HepG2 (cell line): ENCODE measurements at regions of chr1 and their contacts with region 1.

Region 1: DNA sequence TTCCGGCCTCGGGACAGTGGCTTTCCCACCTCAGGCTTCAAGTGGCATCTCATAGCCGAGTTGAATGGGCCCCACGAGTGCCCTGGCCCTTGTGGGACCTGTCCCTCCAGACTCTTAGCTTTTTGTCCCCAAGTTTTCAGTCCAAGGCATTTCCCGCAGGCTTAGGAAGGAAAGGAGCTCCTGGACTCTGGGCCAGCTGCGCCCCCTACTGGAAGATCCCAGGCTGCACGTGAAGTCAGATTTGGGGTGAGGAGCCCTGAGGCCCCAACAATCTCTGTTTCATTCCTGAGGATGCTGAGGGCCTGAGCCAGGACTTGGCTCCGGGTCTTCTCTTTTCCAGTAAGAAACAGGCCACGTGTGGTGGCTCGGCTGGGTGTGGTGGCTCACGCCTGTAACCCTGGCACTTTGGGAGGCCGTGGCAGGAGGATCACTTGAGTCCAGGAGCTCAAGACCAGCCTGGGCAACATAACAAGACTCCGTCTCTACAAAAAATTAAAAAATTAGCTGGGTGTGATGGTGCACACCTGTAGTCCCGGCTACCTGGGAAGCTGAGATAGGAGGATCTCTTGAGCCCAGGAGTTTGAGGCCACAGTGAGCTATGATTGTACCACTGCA is 67.4 kb downstream of the ARHGEF10L start:
- DNase-seq: peak; percentile 62
- ATAC-seq: peak; percentile 55
- H3K4me3 ChIP-seq: no peak overlapping the region
- H3K27ac ChIP-seq: no peak overlapping the region
- H3K4me1 ChIP-seq: peaks cover 25% of the 10 kb centered on the region
- H3K27me3 ChIP-seq: no peaks in the 10 kb centered on the region
- CTCF ChIP-seq: peak; percentile 92
- EP300 ChIP-seq: no peak
- POLR2A ChIP-seq: no peak
- RAD21 ChIP-seq: peak; percentile 90

Region 2: DNA sequence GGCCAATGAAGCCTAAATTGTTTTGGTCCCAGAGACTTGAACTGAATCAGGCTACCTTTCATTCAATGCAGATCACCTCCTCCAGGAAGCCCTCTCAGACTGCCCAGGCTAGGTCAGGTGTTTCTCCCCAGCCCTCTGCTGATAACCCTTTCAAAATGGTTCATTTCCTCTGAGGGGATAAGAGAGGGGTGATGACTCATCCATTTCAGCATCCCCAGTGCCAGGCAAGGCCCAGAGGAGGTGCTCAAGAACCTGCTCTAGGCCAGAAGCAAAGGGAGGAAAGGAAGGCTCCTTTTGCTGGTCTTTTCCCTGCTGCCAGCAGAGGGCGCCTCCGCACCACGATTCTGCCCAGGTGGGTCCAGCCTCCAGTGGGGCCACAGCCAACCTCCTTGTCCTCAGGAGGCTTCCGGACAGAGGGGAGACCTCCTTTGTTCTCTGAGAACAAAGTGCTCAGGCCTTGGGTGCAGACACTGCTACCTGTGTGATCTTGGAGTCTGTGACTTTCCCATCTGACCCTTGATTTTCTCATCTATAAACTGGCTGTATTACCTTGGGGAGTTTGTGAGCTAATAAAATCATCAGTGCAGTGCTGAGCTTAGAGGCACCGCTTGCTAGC is 112.7 kb before region 1 on chr1:
- CTCF ChIA-PET with region 1: interaction called, 25 read pairs
- POLR2A ChIA-PET with region 1: interaction called, 3 read pairs
- in situ Hi-C with region 1: no loop called
- intact Hi-C with region 1: loop called (anchors 2 kb)
- DNase-seq: peak; percentile 58
- ATAC-seq: peak; percentile 91
- H3K4me3 ChIP-seq: no peak overlapping the region
- H3K27ac ChIP-seq: no peak overlapping the region
- H3K4me1 ChIP-seq: peaks cover 32% of the 10 kb centered on the region
- H3K27me3 ChIP-seq: no peaks in the 10 kb centered on the region; a peak in 1 of 5 replicates
- CTCF ChIP-seq: peak; percentile 97
- EP300 ChIP-seq: no peak
- POLR2A ChIP-seq: no peak
- RAD21 ChIP-seq: peak; percentile 95

Region 3: GRCh38 chr1:17502326-17502778 is 104.6 kb before region 1 on chr1:
- CTCF ChIA-PET with region 1: interaction called, 36 read pairs
- POLR2A ChIA-PET with region 1: interaction called, 10 read pairs
- in situ Hi-C with region 1: loop called (anchors 5 kb)
- intact Hi-C with region 1: loop called (anchors 1 kb)
- DNase-seq: peak; percentile 56
- ATAC-seq: peak; percentile 97
- H3K4me3 ChIP-seq: no peak overlapping the region
- H3K27ac ChIP-seq: no peak overlapping the region
- H3K4me1 ChIP-seq: peaks cover 42% of the 10 kb centered on the region
- H3K27me3 ChIP-seq: peaks cover 0 to 6% of the 10 kb centered on the region in 2 experiments; a peak in 2 of 5 replicates
- CTCF ChIP-seq: peak; percentile 96
- EP300 ChIP-seq: no peak
- POLR2A ChIP-seq: no peak
- RAD21 ChIP-seq: peak; percentile 92

Region 4: DNA sequence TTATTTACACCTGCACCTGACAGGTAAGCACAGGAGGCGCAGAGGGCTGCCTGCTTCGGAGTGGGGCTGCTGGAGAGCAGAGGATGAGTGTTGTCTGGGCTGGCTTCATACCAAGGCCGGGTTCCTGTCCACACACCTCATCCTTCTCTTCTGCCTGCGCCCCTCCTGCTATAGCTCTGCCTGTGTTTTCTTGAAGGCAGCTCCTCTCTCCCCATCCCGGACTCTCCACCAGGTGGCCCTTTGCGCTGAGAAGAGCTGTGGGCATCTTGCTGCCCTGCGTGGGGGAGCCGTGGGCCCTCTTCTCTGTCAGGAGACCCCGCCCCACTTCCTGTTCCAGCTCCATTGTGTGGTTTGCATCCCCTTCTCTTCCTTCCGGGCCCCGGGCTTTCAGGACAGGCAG is 32.4 kb before region 1 on chr1:
- CTCF ChIA-PET with region 1: interaction called, 27 read pairs
- POLR2A ChIA-PET with region 1: interaction called, 20 read pairs
- in situ Hi-C with region 1: no loop called
- intact Hi-C with region 1: loop called (anchors 2 kb)
- DNase-seq: no peak
- ATAC-seq: peak; percentile 59
- H3K4me3 ChIP-seq: peak overlapping the region in 1 of 3 experiments; percentile 44; a peak in 1 of 6 replicates
- H3K27ac ChIP-seq: no peak overlapping the region
- H3K4me1 ChIP-seq: peaks cover 80% of the 10 kb centered on the region
- H3K27me3 ChIP-seq: no peaks in the 10 kb centered on the region
- CTCF ChIP-seq: peak; percentile 68
- EP300 ChIP-seq: no peak
- POLR2A ChIP-seq: no peak
- RAD21 ChIP-seq: peak; percentile 48

Region 5: DNA sequence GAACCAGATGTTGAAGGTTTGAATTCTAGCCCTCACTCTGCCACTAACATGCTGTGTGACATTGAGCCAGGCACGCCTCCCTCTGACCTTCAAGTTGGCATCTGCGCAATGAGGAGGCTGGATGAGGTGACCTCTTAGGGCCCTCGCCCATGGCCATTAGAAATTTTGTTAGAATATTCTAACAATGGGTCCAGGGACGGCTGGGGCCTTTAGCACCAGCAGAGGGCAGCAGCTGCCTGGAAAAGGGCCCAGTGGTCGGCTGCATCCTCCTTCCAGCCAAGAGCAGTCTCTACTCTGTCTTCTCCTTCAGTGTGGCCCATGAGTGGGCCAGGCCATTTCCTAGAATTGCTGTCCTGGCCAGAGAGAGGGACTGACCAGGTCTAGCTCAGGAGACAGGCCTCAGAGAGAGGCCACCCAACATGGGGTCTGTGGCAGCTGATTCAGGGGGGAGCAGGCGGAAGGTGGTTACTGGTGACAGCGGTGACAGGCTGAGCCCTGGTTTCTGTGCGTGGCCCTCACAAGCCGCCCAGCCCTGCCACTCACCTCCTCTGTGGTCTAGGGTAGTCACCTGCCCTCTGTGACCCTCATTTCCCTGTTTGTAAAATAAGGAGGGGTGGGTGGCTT is 46.9 kb after region 1 on chr1:
- CTCF ChIA-PET with region 1: no interaction called
- POLR2A ChIA-PET with region 1: no interaction called
- in situ Hi-C with region 1: no loop called
- intact Hi-C with region 1: no loop called
- DNase-seq: no peak
- ATAC-seq: peak; percentile 62
- H3K4me3 ChIP-seq: no peak overlapping the region
- H3K27ac ChIP-seq: no peak overlapping the region
- H3K4me1 ChIP-seq: no peaks in the 10 kb centered on the region
- H3K27me3 ChIP-seq: no peaks in the 10 kb centered on the region
- CTCF ChIP-seq: peak; percentile 64
- EP300 ChIP-seq: no peak
- POLR2A ChIP-seq: no peak
- RAD21 ChIP-seq: no peak

Region 6: DNA sequence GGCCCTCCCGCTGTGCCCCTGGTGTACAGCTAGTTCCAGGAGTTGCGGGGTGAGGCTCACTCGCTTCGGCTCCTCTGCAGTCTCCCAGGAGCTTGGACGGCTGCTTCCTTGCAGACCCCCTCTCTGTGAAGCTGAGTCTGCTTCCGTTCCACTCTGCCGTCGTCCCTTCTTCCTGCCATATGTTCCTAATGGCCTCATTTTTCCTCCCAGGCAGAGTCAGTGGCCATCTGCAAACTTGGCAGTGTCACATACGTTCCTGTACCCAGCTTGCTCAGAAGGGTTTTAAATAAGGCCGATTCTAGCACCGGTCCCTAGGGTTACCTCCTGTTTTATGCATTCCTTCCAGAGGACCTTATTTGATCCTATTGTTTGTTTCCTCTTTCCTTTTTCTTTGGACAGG is 169.5 kb after region 1 on chr1:
- CTCF ChIA-PET with region 1: no interaction called
- POLR2A ChIA-PET with region 1: no interaction called
- in situ Hi-C with region 1: no loop called
- intact Hi-C with region 1: no loop called
- DNase-seq: no peak
- ATAC-seq: no peak
- H3K4me3 ChIP-seq: no peak overlapping the region
- H3K27ac ChIP-seq: no peak overlapping the region
- H3K4me1 ChIP-seq: no peaks in the 10 kb centered on the region
- H3K27me3 ChIP-seq: peaks cover 3 to 67% of the 10 kb centered on the region in 2 experiments; a peak in 3 of 5 replicates
- CTCF ChIP-seq: no peak
- EP300 ChIP-seq: no peak
- POLR2A ChIP-seq: no peak
- RAD21 ChIP-seq: no peak